ENCODE measurements at regions of chr16 and their contacts with region 1.

Region 1: DNA sequence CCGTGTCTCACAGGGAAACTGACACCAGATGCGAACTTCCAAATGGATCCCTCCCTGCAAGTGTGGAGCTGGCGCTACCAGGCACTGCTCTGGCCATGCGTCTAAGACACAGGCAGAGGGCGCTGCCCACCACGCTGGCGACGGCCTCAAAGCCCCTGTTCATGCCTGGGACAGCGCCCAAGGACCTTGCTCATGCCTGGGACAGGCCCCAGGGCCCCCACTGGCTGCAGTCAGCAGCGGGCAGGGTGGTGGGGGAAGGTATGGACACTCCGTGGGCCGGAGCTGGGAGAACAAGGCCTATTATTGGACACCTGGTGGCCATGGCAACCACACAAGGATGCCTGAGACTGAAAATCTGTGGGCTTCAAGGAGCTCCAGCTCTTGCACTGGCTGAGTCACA is 8.8 kb downstream of the ZG16B start:
- DNase-seq: peak; percentile 86
- ATAC-seq: peak; percentile 94
- H3K4me3 Mint-ChIP-seq: peak overlapping the region; percentile 29; the same call in 1 of the 2 replicates
- H3K27ac Mint-ChIP-seq: no peak overlapping the region
- H3K4me1 Mint-ChIP-seq: peaks cover 14% of the 10 kb centered on the region
- H3K27me3 Mint-ChIP-seq: peaks cover 14% of the 10 kb centered on the region
- CTCF ChIP-seq: peak; percentile 85

Region 2: DNA sequence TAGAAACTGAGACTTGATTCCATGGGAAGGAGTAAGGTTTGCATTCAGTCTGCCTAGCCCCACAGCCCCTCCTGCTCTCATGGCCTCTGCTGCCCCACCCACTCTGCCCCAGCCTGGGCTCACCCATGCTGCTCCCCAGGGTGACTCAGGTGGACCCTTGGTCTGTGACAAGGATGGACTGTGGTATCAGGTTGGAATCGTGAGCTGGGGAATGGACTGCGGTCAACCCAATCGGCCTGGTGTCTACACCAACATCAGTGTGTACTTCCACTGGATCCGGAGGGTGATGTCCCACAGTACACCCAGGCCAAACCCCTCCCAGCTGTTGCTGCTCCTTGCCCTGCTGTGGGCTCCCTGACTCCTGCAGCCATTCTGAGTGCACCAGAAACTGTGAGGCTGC is 34.2 kb before region 1 on chr16:
- CTCF ChIA-PET with region 1: no interaction called
- POLR2A ChIA-PET with region 1: no interaction called
- DNase-seq: no peak
- ATAC-seq: no peak
- H3K4me3 Mint-ChIP-seq: no peak overlapping the region
- H3K27ac Mint-ChIP-seq: no peak overlapping the region
- H3K4me1 Mint-ChIP-seq: no peaks in the 10 kb centered on the region
- H3K27me3 Mint-ChIP-seq: peaks cover 32% of the 10 kb centered on the region
- CTCF ChIP-seq: no peak

Region 3: DNA sequence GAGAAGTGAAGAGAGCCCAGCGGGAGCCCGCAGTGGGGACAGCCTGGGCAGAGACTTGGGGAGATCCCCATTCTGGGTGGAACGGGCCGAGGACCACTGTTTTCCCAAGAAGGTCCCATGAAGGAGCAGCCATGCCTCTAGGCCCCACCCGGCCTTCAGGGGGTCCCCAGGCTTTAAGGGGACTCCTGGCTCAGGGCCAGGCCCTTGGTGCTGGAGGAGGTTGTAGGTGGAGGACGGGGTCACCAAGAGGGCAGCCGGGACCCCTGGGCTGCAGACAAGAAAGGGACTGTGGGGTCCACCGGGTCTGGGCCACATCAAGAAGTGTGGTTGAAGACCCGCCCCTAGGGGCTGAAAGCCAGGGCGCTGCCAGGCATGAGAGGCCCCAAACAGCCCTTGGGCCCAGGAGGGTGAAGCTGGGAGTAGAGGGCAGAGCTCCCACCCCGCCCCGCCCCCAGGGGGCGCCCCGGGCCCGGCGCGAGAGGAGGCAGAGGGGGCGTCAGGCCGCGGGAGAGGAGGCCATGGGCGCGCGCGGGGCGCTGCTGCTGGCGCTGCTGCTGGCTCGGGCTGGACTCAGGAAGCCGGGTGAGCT is 22.1 kb before region 1 on chr16 and contains the start of gene PRSS21:
- CTCF ChIA-PET with region 1: interaction called, 17 read pairs
- POLR2A ChIA-PET with region 1: no interaction called
- DNase-seq: peak; percentile 67
- ATAC-seq: peak; percentile 83
- H3K4me3 Mint-ChIP-seq: no peak within 1 kb of the TSS
- H3K27ac Mint-ChIP-seq: no peak within 1 kb of the TSS
- H3K4me1 Mint-ChIP-seq: no peaks in the 10 kb centered on the region
- H3K27me3 Mint-ChIP-seq: no peaks in the 10 kb centered on the region
- CTCF ChIP-seq: peak; percentile 68
- total RNA-seq, gene PRSS21: 1.2 to 1.5 TPM (median 1.4 TPM) in 3 replicates

Region 4: GRCh38 chr16:2854700-2855309 is 15.9 kb after region 1 on chr16:
- CTCF ChIA-PET with region 1: interaction called, 27 read pairs
- POLR2A ChIA-PET with region 1: no interaction called
- DNase-seq: peak; percentile 65
- ATAC-seq: no peak
- H3K4me3 Mint-ChIP-seq: no peak overlapping the region
- H3K27ac Mint-ChIP-seq: no peak overlapping the region
- H3K4me1 Mint-ChIP-seq: peaks cover 5% of the 10 kb centered on the region
- H3K27me3 Mint-ChIP-seq: peaks cover 26% of the 10 kb centered on the region
- CTCF ChIP-seq: peak; percentile 76

Region 5: DNA sequence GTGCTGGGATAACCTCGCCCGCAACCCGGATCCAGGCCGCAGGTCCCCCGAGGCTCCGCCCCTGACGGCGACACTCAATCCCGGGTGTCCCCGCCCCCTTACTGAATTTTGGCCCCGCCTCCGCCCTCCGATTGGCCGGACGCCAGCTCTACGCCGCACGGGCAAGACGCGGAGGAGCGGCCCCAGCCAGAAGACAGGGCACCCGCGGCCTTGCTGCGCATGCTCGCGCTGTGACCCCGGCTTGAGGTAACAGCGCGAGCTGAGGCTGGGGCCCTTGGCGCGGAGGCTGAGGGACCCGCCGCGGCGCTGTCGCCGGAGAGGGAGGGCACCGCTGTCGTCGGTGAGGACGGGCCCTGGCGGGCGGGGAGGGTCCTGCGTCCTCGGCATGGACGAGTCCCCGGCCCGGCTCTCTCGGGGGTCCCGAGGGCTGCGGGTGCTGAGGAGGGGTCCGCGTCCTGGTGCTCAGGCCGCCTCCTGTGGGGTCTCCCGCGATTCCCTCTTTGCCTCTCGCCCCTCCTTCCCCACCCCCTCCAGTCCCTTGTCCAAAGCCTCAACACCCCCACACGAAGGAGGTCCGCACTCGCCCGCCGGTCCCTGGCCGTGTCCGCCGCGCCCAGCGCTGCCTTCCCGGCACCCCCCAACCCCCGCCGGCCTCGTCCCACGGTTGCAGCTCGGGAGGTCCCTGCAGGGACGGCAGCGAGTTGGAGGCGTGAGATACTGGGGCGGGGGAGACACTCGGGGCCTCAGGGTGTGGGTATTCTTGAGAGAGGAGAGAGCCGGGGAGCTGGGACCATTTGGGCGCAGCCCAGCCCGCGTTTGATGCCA is 44.3 kb after region 1 on chr16 and contains the start of gene FLYWCH2:
- CTCF ChIA-PET with region 1: interaction called, 34 read pairs
- POLR2A ChIA-PET with region 1: interaction called, 3 read pairs
- DNase-seq: peak; percentile 100
- ATAC-seq: peak; percentile 87
- H3K4me3 Mint-ChIP-seq: peak within 1 kb of the TSS; percentile 83
- H3K27ac Mint-ChIP-seq: peak within 1 kb of the TSS; percentile 82
- H3K4me1 Mint-ChIP-seq: peaks cover 6% of the 10 kb centered on the region
- H3K27me3 Mint-ChIP-seq: peaks cover 40% of the 10 kb centered on the region
- CTCF ChIP-seq: no peak
- total RNA-seq, gene FLYWCH2: 19.7 to 25.0 TPM (median 20.7 TPM) in 3 replicates

Region 6: DNA sequence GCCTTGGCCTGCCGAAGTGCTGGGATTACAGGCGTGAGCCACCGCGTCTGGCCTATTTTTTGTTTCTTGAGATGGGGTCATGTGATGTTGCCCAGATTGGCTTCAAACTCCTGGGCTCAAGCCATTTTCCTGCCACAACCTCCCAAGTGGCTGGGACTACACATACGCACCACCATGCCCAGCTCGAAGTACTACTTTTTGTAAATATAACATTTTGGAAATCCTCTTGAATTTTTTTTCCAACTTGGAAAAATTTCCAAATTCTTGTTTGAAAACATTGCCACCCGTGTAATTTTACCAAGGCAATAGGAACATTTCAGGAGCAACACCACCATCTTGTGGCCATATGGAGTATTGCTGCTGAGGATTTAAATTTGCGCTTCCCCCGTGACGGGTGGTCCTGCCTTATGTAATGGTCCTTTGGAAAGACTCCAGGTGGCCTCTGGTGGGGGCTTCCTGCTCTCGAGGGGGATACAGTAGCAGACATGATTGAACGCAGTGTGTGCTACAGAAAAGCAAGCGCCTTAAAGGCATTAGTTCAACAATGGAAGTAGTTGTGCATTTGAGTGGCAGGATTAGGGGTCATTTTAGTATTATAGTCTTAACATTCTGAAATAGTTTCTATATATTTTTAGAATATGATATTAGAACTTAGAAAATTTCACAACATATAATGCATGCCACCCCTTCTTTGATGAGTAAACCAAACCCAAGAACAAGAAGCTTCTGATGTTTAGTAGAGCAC is 80.8 kb after region 1 on chr16:
- CTCF ChIA-PET with region 1: interaction called, 31 read pairs
- POLR2A ChIA-PET with region 1: no interaction called
- DNase-seq: peak; percentile 73
- ATAC-seq: peak; percentile 50; the same call in 1 of the 2 replicates
- H3K4me3 Mint-ChIP-seq: no peak overlapping the region
- H3K27ac Mint-ChIP-seq: peak overlapping the region; percentile 72; the same call in 1 of the 2 replicates
- H3K4me1 Mint-ChIP-seq: no peaks in the 10 kb centered on the region; the same call in 1 of the 2 replicates
- H3K27me3 Mint-ChIP-seq: no peaks in the 10 kb centered on the region
- CTCF ChIP-seq: peak; percentile 93

Measured in WTC11 (cell line).